Activated CD4-positive, alpha-beta T cell treated with anti-CD3 and anti-CD28 coated beads, Interleukin-2, amount 10 ng/mL, durations not matched to agents 24 days and 14 days (primary cell): ENCODE measurements at regions of chr2 and their contacts with region 1.

Region 1: GRCh38 chr2:196926562-196927375 is at the start of gene PGAP1:
- DNase-seq: peak; percentile 97
- H3K4me3 Mint-ChIP-seq: peak within 1 kb of the TSS; percentile 100
- H3K27ac Mint-ChIP-seq: peak within 1 kb of the TSS; percentile 100
- H3K4me1 Mint-ChIP-seq: peaks cover 46% of the 10 kb centered on the region
- H3K27me3 Mint-ChIP-seq: no peaks in the 10 kb centered on the region
- total RNA-seq, gene PGAP1: 22.6 and 27.1 TPM in 2 replicates

Region 2: GRCh38 chr2:196798980-196799379 is 127.8 kb before region 1 on chr2:
- intact Hi-C with region 1: loop called (anchors 2 kb)
- DNase-seq: peak; percentile 61
- H3K4me3 Mint-ChIP-seq: peak overlapping the region; percentile 90
- H3K27ac Mint-ChIP-seq: peak overlapping the region; percentile 96
- H3K4me1 Mint-ChIP-seq: peaks cover 27% of the 10 kb centered on the region
- H3K27me3 Mint-ChIP-seq: no peaks in the 10 kb centered on the region

Region 3: GRCh38 chr2:196961889-196962288 is 35.1 kb after region 1 on chr2:
- intact Hi-C with region 1: loop called (anchors 1 kb)
- DNase-seq: peak; percentile 70
- H3K4me3 Mint-ChIP-seq: peak overlapping the region; percentile 65
- H3K27ac Mint-ChIP-seq: peak overlapping the region; percentile 83
- H3K4me1 Mint-ChIP-seq: peaks cover 24% of the 10 kb centered on the region
- H3K27me3 Mint-ChIP-seq: no peaks in the 10 kb centered on the region

Region 4: GRCh38 chr2:196980473-196980872 is 53.7 kb after region 1 on chr2:
- intact Hi-C with region 1: no loop called
- DNase-seq: peak; percentile 39
- H3K4me3 Mint-ChIP-seq: no peak overlapping the region
- H3K27ac Mint-ChIP-seq: no peak overlapping the region
- H3K4me1 Mint-ChIP-seq: peaks cover 9% of the 10 kb centered on the region
- H3K27me3 Mint-ChIP-seq: no peaks in the 10 kb centered on the region

Region 5: GRCh38 chr2:197198890-197199289 is 272.1 kb after region 1 on chr2:
- intact Hi-C with region 1: loop called (anchors 5 kb)
- DNase-seq: peak; percentile 97
- H3K4me3 Mint-ChIP-seq: peak overlapping the region; percentile 84
- H3K27ac Mint-ChIP-seq: peak overlapping the region; percentile 99
- H3K4me1 Mint-ChIP-seq: peaks cover 65% of the 10 kb centered on the region
- H3K27me3 Mint-ChIP-seq: no peaks in the 10 kb centered on the region

Region 6: GRCh38 chr2:197453161-197453914 is 526.6 kb after region 1 on chr2 and contains the start of gene COQ10B:
- intact Hi-C with region 1: loop called (anchors 1 kb)
- DNase-seq: peak; percentile 100
- H3K4me3 Mint-ChIP-seq: peak within 1 kb of the TSS; percentile 100
- H3K27ac Mint-ChIP-seq: peak within 1 kb of the TSS; percentile 100
- H3K4me1 Mint-ChIP-seq: peaks cover 26% of the 10 kb centered on the region
- H3K27me3 Mint-ChIP-seq: no peaks in the 10 kb centered on the region
- total RNA-seq, gene COQ10B: 20.1 TPM in 2 replicates